Ascending aorta (tissue), 2 donors: ENCODE measurements at regions of chr19 and their contacts with region 1.

Region 1: GRCh38 chr19:23686621-23687423 is at the start of gene ZNF675:
- DNase-seq: peak; percentile 81 to 95
- H3K4me3 ChIP-seq: peak within 1 kb of the TSS; percentile 71 to 77
- H3K27ac ChIP-seq: peak within 1 kb of the TSS; percentile 68 to 74
- H3K4me1 ChIP-seq: peaks cover 0 to 6% of the 10 kb centered on the region in 2 donors
- H3K27me3 ChIP-seq: no peaks in the 10 kb centered on the region
- CTCF ChIP-seq: no peak
- total RNA-seq, gene ZNF675: 7.8 TPM

Region 2: DNA sequence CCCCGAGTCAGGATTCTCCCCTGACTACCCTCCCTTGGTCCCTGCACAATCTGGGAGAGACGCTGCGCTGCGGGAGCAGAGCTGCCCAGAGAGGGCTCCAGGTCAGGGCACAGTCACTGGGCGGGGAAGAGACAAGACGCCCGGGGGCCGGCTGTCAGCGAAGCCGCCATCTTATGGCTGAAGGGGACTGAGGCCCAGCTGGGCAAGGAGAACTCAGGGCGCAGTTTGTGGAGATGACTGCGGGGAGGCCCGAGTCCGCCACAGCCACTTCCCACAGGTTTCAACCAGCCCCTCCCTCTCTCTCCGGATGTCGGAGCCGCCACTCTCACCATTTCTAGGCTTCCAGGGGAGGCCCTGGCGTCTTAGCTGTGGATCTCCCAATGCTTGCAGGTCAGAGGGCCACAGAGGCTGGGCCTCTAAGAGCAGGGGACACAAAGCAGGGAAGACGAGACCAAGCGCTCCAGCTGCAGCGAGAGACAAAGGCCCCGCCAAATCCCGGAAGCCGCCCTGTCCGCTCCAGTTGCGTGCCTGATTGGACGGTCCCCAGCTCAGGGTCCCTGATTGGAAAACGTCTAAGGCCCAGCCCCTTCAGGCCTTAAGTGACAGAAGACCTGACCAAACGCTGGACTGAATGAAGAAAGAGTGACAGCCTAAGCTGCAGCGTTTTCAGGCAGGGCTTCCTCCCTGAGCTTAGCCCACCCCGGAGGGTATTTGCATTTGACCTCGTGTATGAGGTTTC is 436.7 kb before region 1 on chr19 and contains the start of gene ZNF724:
- intact Hi-C with region 1: loop called (anchors 2 kb)
- DNase-seq: peak; percentile 69 to 94
- H3K4me3 ChIP-seq: peak within 1 kb of the TSS; percentile 67 to 88
- H3K27ac ChIP-seq: peak within 1 kb of the TSS in 1 of 2 donors; percentile 57
- H3K4me1 ChIP-seq: peaks cover 6 to 7% of the 10 kb centered on the region in 2 donors
- H3K27me3 ChIP-seq: no peaks in the 10 kb centered on the region
- CTCF ChIP-seq: no peak
- total RNA-seq, gene ZNF724: not detected

Region 3: DNA sequence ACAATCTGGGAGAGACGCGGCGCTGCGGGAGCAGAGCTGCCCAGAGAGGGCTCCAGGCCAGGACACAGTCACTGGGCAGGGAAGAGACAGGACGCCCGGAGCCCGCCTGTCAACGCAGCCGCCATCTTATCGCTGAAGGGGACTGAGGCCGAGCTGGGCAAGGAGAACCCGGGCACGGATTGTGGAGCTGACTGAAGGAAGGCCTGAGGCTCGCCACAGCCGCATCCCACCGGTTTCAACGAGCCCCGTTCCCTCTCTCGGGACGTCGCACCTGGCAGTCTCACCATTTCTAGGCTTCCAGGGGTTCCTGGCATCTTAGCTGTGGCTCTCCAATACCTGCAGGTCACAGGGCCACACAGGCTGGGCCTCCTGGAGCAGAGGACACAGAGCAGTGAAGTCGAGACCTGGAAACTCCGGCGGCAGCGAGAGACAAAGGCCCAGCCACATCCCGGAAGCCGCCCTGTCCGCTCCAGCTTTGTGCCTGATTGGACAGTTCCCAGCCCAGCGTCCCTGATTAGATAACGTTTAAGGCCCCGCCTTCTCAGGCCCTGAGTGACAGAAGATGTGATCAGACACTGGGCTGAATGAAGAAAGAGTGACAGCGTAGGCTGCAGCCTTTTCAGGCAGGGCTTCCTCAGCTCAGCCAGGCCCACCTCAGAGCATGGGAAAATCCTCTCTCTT is 291.6 kb before region 1 on chr19 and contains the start of gene ZNF91:
- intact Hi-C with region 1: loop called (anchors 5 kb)
- DNase-seq: peak; percentile 94 to 98
- H3K4me3 ChIP-seq: peak within 1 kb of the TSS; percentile 90 to 92
- H3K27ac ChIP-seq: peak within 1 kb of the TSS; percentile 95 to 96
- H3K4me1 ChIP-seq: peaks cover 10 to 12% of the 10 kb centered on the region in 2 donors
- H3K27me3 ChIP-seq: no peaks in the 10 kb centered on the region
- CTCF ChIP-seq: no peak
- total RNA-seq, gene ZNF91: 28.5 TPM

Region 4: GRCh38 chr19:23758187-23759074 is 71.6 kb after region 1 on chr19 and contains the start of gene ZNF681:
- intact Hi-C with region 1: loop called (anchors 2 kb)
- DNase-seq: peak; percentile 71 to 93
- H3K4me3 ChIP-seq: peak within 1 kb of the TSS; percentile 52 to 86
- H3K27ac ChIP-seq: peak within 1 kb of the TSS; percentile 71 to 77
- H3K4me1 ChIP-seq: peaks cover 0 to 5% of the 10 kb centered on the region in 2 donors
- H3K27me3 ChIP-seq: no peaks in the 10 kb centered on the region
- CTCF ChIP-seq: peak in 1 of 3 experiments; percentile 17
- total RNA-seq, gene ZNF681: 1.9 TPM

Region 5: GRCh38 chr19:23777216-23777950 is 90.6 kb after region 1 on chr19:
- intact Hi-C with region 1: no loop called
- DNase-seq: no peak
- H3K4me3 ChIP-seq: no peak overlapping the region
- H3K27ac ChIP-seq: no peak overlapping the region
- H3K4me1 ChIP-seq: no peaks in the 10 kb centered on the region
- H3K27me3 ChIP-seq: no peaks in the 10 kb centered on the region
- CTCF ChIP-seq: no peak

Region 6: GRCh38 chr19:24033301-24033962 is 346.6 kb after region 1 on chr19:
- intact Hi-C with region 1: loop called (anchors 2 kb)
- DNase-seq: peak; percentile 67 to 93
- H3K4me3 ChIP-seq: peak overlapping the region; percentile 88 to 90
- H3K27ac ChIP-seq: peak overlapping the region; percentile 93 to 96
- H3K4me1 ChIP-seq: peaks cover 4 to 10% of the 10 kb centered on the region in 2 donors
- H3K27me3 ChIP-seq: no peaks in the 10 kb centered on the region
- CTCF ChIP-seq: no peak